ENCODE measurements at regions of chr1 and their contacts with region 1.

Region 1: GRCh38 chr1:203316626-203317093 is 11.3 kb downstream of the BTG2 start:
- DNase-seq: no peak
- ATAC-seq: peak; percentile 74
- H3K4me3 ChIP-seq: no peak overlapping the region
- H3K27ac ChIP-seq: no peak overlapping the region; the same call in 1 of the 2 replicates
- H3K4me1 ChIP-seq: no peaks in the 10 kb centered on the region; the same call in 1 of the 2 replicates
- H3K27me3 ChIP-seq: peaks cover 2% of the 10 kb centered on the region
- CTCF ChIP-seq: no peak

Region 2: GRCh38 chr1:203216274-203217138 is 100.2 kb before region 1 on chr1:
- CTCF ChIA-PET with region 1: interaction called, 12 read pairs
- POLR2A ChIA-PET with region 1: no interaction called
- in situ Hi-C with region 1: no loop called
- intact Hi-C with region 1: no loop called
- DNase-seq: peak; percentile 53
- ATAC-seq: peak; percentile 86
- H3K4me3 ChIP-seq: no peak overlapping the region
- H3K27ac ChIP-seq: no peak overlapping the region
- H3K4me1 ChIP-seq: no peaks in the 10 kb centered on the region
- H3K27me3 ChIP-seq: no peaks in the 10 kb centered on the region; the same call in 1 of the 2 replicates
- CTCF ChIP-seq: peak; percentile 83